GM12878 (cell line): ENCODE measurements at regions of chr7 and their contacts with region 1.

Region 1: GRCh38 chr7:50679218-50680007 is 103.3 kb downstream of the GRB10 start:
- DNase-seq: no peak
- ATAC-seq: peak; percentile 80
- H3K4me3 ChIP-seq: no peak overlapping the region
- H3K27ac ChIP-seq: no peak overlapping the region
- H3K4me1 ChIP-seq: no peaks in the 10 kb centered on the region
- H3K27me3 ChIP-seq: peaks cover 4 to 10% of the 10 kb centered on the region in 2 experiments; a peak in 3 of 4 replicates
- CTCF ChIP-seq: peak; percentile 29 to 55 (median 40); a peak in 4 of 6 replicates
- EP300 ChIP-seq: no peak
- POLR2A ChIP-seq: no peak
- RAD21 ChIP-seq: peak; percentile 71

Region 2: GRCh38 chr7:50142425-50143017 is 536.9 kb before region 1 on chr7:
- CTCF ChIA-PET with region 1: no interaction called
- POLR2A ChIA-PET with region 1: no interaction called
- RAD21 ChIA-PET with region 1: no interaction called
- SMC1A ChIA-PET with region 1: no interaction called
- in situ Hi-C with region 1: no loop called
- intact Hi-C with region 1: loop called (anchors 2 kb)
- DNase-seq: peak; percentile 24
- ATAC-seq: peak; percentile 51
- H3K4me3 ChIP-seq: no peak overlapping the region
- H3K27ac ChIP-seq: no peak overlapping the region
- H3K4me1 ChIP-seq: peaks cover 24% of the 10 kb centered on the region
- H3K27me3 ChIP-seq: no peaks in the 10 kb centered on the region; a peak in 1 of 4 replicates
- CTCF ChIP-seq: peak; percentile 55 to 61 (median 60)
- EP300 ChIP-seq: no peak
- POLR2A ChIP-seq: no peak
- RAD21 ChIP-seq: peak; percentile 85

Region 3: DNA sequence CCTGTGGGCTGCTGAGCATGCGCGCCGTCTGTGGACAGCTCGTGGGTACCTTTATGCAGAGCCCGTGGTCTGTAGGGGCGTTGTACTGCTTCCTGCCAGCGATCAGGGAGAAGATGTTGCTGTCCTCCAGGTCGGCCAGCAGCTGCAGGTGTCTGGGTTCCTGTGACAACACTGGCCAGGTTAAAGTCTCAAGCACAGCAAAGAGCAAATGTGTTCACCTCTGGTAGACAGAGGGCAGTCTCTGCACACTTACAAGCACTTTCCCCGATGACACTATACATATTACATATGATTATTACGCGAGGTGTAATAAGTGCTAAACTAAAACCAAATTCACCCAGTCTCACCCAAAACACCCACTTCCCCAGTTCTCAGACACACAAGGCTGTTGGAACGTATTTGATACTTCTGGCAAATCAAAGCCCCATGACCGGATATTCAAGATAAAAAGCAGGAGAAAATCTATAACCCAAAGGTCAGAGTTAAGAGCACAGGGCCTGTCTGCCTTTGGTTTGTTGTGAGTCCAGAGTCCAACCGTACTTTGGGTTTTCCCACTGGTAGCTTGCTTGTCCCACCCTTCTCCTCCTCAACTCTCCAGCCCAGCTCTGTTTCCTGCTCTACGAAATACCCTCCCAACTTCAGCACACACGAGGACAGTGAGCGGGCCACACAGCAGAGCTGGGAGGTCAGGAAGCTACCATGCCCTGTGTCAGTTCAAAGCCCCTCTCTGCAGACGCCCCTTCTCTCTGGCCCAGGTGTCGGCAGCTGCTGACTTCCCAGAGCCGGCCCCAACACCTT is 64.5 kb before region 1 on chr7:
- CTCF ChIA-PET with region 1: no interaction called
- POLR2A ChIA-PET with region 1: no interaction called
- RAD21 ChIA-PET with region 1: no interaction called
- SMC1A ChIA-PET with region 1: no interaction called
- in situ Hi-C with region 1: no loop called
- intact Hi-C with region 1: loop called (anchors 2 kb)
- DNase-seq: no peak
- ATAC-seq: peak; percentile 31; the same call in 1 of the 3 replicates
- H3K4me3 ChIP-seq: no peak overlapping the region
- H3K27ac ChIP-seq: no peak overlapping the region
- H3K4me1 ChIP-seq: no peaks in the 10 kb centered on the region
- H3K27me3 ChIP-seq: peaks cover 0 to 5% of the 10 kb centered on the region in 2 experiments; a peak in 2 of 4 replicates
- CTCF ChIP-seq: peak in 2 of 3 experiments; percentile 28 to 34; a peak in 2 of 6 replicates
- EP300 ChIP-seq: no peak
- POLR2A ChIP-seq: no peak
- RAD21 ChIP-seq: 0 out of 2 replicates have a peak, but pooled peaks have one; percentile 20

Region 4: DNA sequence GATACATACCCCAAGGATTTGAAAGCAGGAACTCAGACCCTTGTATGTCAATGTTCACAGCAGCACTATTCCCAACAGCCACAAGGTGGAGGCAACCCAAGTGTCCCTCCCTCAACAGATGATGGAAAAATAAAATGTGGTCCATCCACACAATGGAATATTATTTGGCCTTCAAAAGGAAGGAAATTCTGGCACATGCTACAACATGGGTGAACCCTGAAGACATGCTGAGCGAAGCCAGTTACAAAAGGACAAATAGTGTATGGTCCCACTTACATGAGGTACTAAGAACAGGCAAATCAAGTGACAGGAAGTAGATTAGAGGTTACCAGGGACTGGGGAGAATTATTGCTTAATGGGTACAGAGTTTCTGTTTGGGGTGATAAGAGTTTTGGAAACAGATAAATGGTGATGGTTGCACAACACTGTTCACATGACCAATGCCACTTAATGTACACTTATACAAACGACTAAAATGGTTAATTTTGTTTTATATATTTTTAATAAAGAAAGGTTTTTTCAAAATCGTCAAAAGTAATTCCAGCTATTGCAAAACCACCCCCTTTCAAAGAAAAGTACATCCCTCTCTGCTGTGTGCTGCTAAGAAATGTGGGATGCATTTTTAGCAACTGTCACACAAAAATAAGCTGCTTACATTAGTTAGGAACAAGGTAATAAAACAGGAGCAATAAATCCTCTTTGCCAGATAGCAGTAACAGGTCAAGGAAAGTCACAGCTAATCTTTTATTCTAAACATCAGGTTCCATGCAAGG is 17.6 kb after region 1 on chr7:
- CTCF ChIA-PET with region 1: no interaction called
- POLR2A ChIA-PET with region 1: no interaction called
- RAD21 ChIA-PET with region 1: no interaction called
- SMC1A ChIA-PET with region 1: no interaction called
- in situ Hi-C with region 1: no loop called
- intact Hi-C with region 1: no loop called
- DNase-seq: no peak
- ATAC-seq: peak; percentile 54; the same call in 2 of the 3 replicates
- H3K4me3 ChIP-seq: no peak overlapping the region
- H3K27ac ChIP-seq: no peak overlapping the region
- H3K4me1 ChIP-seq: no peaks in the 10 kb centered on the region
- H3K27me3 ChIP-seq: peaks cover 0 to 3% of the 10 kb centered on the region in 2 experiments; a peak in 3 of 4 replicates
- CTCF ChIP-seq: peak; percentile 17 to 47 (median 36); a peak in 5 of 6 replicates
- EP300 ChIP-seq: no peak
- POLR2A ChIP-seq: no peak
- RAD21 ChIP-seq: no peak